T-cell (primary cell): ENCODE measurements at regions of chr17 and their contacts with region 1.

Region 1: GRCh38 chr17:68356520-68356919 is 65.2 kb downstream of the ARSG start:
- DNase-seq: peak; percentile 38 to 88 (median 65)
- ATAC-seq: peak; percentile 95 to 99 (median 98)
- H3K4me3 ChIP-seq: peak overlapping the region; percentile 11 to 46
- H3K4me3 Mint-ChIP-seq: peak overlapping the region; percentile 43 to 66 (median 56)
- H3K27ac ChIP-seq: peak overlapping the region; percentile 67
- H3K27ac Mint-ChIP-seq: peak overlapping the region; percentile 87 to 88
- H3K4me1 ChIP-seq: peaks cover 28 to 70% of the 10 kb centered on the region in 2 experiments
- H3K4me1 Mint-ChIP-seq: peaks cover 62 to 65% (median 64%) of the 10 kb centered on the region in 3 donors
- H3K27me3 ChIP-seq: no peaks in the 10 kb centered on the region
- H3K27me3 Mint-ChIP-seq: no peaks in the 10 kb centered on the region

Region 2: GRCh38 chr17:68074279-68074678 is 282.2 kb before region 1 on chr17:
- CTCF ChIA-PET with region 1: no interaction called
- POLR2A ChIA-PET with region 1: interaction called in 1 of 2 experiments, 19 read pairs
- DNase-seq: no peak
- ATAC-seq: no peak
- H3K4me3 ChIP-seq: no peak overlapping the region
- H3K4me3 Mint-ChIP-seq: no peak overlapping the region
- H3K27ac ChIP-seq: no peak overlapping the region
- H3K27ac Mint-ChIP-seq: no peak overlapping the region
- H3K4me1 ChIP-seq: no peaks in the 10 kb centered on the region
- H3K4me1 Mint-ChIP-seq: no peaks in the 10 kb centered on the region
- H3K27me3 ChIP-seq: no peaks in the 10 kb centered on the region
- H3K27me3 Mint-ChIP-seq: no peaks in the 10 kb centered on the region

Region 3: DNA sequence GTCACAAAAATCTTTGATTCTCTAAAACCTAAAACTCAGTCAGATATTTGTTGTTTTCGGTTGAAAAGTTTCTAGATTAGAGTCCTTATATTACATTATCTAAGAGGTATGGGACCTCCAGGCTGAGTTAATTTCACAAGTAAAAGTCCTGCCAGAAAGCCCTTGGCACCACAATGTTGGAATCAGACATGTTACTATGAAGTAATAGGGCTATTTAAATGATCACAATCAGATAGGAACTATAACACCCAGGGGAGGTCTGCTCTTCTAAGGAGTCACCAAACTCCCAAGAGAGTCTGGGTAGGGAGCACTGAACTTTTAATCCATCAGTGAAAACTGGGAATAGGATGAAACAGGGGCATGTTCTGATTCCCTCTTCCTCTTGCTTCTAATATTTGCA is 46.6 kb after region 1 on chr17:
- CTCF ChIA-PET with region 1: no interaction called
- POLR2A ChIA-PET with region 1: no interaction called
- DNase-seq: no peak
- ATAC-seq: no peak
- H3K4me3 ChIP-seq: no peak overlapping the region
- H3K4me3 Mint-ChIP-seq: no peak overlapping the region
- H3K27ac ChIP-seq: no peak overlapping the region
- H3K27ac Mint-ChIP-seq: peak overlapping the region in 1 of 2 donors; percentile 41
- H3K4me1 ChIP-seq: peaks cover 19 to 20% of the 10 kb centered on the region in 2 experiments
- H3K4me1 Mint-ChIP-seq: peaks cover 19 to 26% (median 20%) of the 10 kb centered on the region in 3 donors
- H3K27me3 ChIP-seq: no peaks in the 10 kb centered on the region
- H3K27me3 Mint-ChIP-seq: no peaks in the 10 kb centered on the region

Region 4: GRCh38 chr17:69300222-69300621 is 943.7 kb after region 1 on chr17:
- CTCF ChIA-PET with region 1: no interaction called
- POLR2A ChIA-PET with region 1: no interaction called
- DNase-seq: no peak
- ATAC-seq: no peak
- H3K4me3 ChIP-seq: no peak overlapping the region
- H3K4me3 Mint-ChIP-seq: no peak overlapping the region
- H3K27ac ChIP-seq: no peak overlapping the region
- H3K27ac Mint-ChIP-seq: no peak overlapping the region
- H3K4me1 ChIP-seq: no peaks in the 10 kb centered on the region
- H3K4me1 Mint-ChIP-seq: peaks cover 0 to 6% (median 0%) of the 10 kb centered on the region in 3 donors
- H3K27me3 ChIP-seq: no peaks in the 10 kb centered on the region
- H3K27me3 Mint-ChIP-seq: no peaks in the 10 kb centered on the region